Activated naive CD8-positive, alpha-beta T cell treated with anti-CD3 and anti-CD28 coated beads, Interleukin-2, amount 10 ng/mL, durations not matched to agents 7 days and 5 days (primary cell): ENCODE measurements at regions of chr6 and their contacts with region 1.

Region 1: GRCh38 chr6:125790358-125791150 is at the start of gene NCOA7:
- DNase-seq: peak; percentile 85
- ATAC-seq: peak; percentile 85
- H3K4me3 Mint-ChIP-seq: peak within 1 kb of the TSS; percentile 96
- H3K27ac Mint-ChIP-seq: peak within 1 kb of the TSS; percentile 99
- H3K4me1 Mint-ChIP-seq: peaks cover 36% of the 10 kb centered on the region
- H3K27me3 Mint-ChIP-seq: no peaks in the 10 kb centered on the region
- total RNA-seq, gene NCOA7: 51.1 to 58.6 TPM

Region 2: GRCh38 chr6:125301435-125302391 is 488.8 kb before region 1 on chr6 and contains the start of gene HDDC2:
- POLR2A ChIA-PET with region 1: interaction called, 14 read pairs
- DNase-seq: peak; percentile 72
- ATAC-seq: peak; percentile 73
- H3K4me3 Mint-ChIP-seq: peak within 1 kb of the TSS; percentile 92
- H3K27ac Mint-ChIP-seq: peak within 1 kb of the TSS; percentile 90
- H3K4me1 Mint-ChIP-seq: peaks cover 38% of the 10 kb centered on the region
- H3K27me3 Mint-ChIP-seq: peaks cover 21% of the 10 kb centered on the region
- total RNA-seq, gene HDDC2: 61.3 to 72.3 TPM

Region 3: GRCh38 chr6:125639466-125640020 is 151.0 kb before region 1 on chr6:
- POLR2A ChIA-PET with region 1: no interaction called
- DNase-seq: no peak
- ATAC-seq: no peak
- H3K4me3 Mint-ChIP-seq: no peak overlapping the region
- H3K27ac Mint-ChIP-seq: no peak overlapping the region
- H3K4me1 Mint-ChIP-seq: peaks cover 4% of the 10 kb centered on the region
- H3K27me3 Mint-ChIP-seq: peaks cover 4% of the 10 kb centered on the region

Region 4: DNA sequence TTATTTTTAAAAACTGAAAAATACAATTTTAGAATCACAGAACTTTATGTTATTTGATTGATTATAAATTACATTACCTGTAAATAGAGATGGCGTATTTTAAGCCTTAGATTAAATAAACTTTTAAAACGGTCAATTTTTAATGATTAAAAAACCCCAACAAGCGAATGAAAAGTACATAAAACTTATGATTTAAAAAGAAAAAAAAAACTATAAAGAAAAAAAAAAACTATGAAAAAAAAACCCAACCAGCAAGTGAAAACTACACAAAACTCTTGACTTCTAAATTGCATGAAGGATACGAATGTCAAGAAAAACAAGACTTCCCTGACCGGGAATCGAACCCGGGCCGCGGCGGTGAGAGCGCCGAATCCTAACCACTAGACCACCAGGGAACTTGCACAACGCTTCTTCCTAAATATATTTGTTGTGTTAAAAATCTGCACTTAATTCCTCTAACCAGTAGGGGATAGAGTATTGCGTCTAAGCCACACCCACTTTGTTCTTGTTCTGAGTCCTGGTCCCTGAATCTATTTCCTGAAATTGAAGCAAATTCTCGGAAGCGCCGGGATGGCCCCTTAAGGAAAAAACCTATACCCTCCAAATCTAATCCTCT is 10.5 kb before region 1 on chr6:
- POLR2A ChIA-PET with region 1: interaction called, 161 read pairs
- DNase-seq: peak; percentile 87
- ATAC-seq: peak; percentile 79
- H3K4me3 Mint-ChIP-seq: no peak overlapping the region
- H3K27ac Mint-ChIP-seq: no peak overlapping the region
- H3K4me1 Mint-ChIP-seq: peaks cover 10% of the 10 kb centered on the region
- H3K27me3 Mint-ChIP-seq: peaks cover 23% of the 10 kb centered on the region

Region 5: DNA sequence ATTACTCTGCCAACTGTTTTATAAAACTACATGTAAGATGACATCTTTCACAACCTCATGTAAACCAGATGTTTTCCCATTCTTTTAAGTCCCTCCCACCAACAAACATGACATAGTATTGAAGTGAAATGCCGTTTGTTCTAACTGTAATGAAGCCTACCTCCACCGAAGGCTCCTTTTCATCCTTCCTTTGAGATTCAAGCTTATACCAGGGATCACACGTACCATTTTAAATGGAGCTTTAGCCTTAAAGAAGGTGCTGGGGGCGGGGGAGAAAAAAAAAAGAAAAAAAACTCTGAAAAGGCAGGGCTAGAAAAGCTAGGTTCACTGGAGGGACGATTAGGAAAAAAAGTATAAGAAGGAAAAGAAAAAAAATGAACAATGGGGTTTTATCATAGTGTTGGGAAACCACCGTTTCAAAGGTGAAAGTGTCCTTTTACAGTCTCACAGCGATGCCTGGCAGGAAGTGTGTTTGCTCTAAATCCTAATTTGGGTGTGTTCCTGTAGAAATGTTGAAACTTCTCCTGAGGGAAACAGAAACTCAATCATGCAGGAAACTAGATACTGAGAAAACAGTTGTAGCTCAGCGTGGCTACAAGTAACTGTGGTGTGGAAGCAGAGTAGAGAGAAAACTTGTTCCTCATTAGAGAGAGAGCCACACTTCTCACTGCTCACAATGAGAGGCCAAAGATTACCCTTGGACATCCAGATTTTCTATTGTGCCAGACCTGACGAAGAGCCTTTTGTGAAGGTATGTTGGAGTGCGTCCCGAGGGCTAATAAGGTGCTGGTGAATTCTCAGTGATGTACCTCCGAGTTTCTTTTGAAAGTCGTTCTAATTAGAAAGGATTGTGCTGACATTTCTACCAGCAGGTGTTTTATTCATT is 128.4 kb after region 1 on chr6:
- POLR2A ChIA-PET with region 1: interaction called, 35 read pairs
- DNase-seq: no peak
- ATAC-seq: peak; percentile 97
- H3K4me3 Mint-ChIP-seq: peak overlapping the region; percentile 92
- H3K27ac Mint-ChIP-seq: peak overlapping the region; percentile 93
- H3K4me1 Mint-ChIP-seq: peaks cover 33% of the 10 kb centered on the region
- H3K27me3 Mint-ChIP-seq: no peaks in the 10 kb centered on the region

Region 6: DNA sequence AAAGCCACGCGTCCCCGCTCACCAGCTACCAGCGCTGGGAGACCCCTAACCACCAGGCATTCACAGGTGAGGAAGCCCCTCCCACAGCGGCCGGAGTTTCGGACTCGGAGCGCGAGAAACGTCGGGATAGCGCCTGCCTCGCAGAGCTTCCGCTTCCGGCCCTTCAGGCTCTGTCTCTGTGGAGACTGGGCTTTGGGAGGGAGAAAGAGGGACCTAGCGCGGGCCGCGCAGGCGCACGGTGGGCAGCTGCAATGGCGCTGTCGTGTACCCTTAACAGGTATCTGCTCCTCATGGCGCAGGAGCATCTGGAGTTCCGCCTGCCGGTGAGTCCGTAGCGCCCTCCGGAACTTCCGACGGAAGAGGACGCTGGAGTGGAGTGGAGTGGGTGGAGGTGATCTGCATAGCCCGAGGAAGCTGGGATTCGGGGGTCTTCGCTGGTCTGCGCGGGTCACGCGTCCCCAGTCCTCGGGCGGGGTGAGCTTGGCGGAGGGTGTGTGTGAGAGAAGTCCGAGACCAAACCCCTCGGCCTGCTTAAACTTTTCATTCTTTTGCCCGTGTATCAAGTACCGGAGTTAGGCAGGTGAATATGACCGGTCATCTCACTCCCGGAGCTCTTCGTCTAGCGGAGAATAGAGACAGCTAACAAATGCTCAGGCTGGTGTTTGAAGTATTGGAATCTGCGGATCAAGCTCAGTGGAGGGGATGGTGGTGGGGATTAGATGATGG is 195.9 kb after region 1 on chr6 and contains the start of gene TRMT11:
- POLR2A ChIA-PET with region 1: interaction called, 37 read pairs
- DNase-seq: peak; percentile 79
- ATAC-seq: peak; percentile 98
- H3K4me3 Mint-ChIP-seq: peak within 1 kb of the TSS; percentile 31
- H3K27ac Mint-ChIP-seq: no peak within 1 kb of the TSS
- H3K4me1 Mint-ChIP-seq: peaks cover 9% of the 10 kb centered on the region
- H3K27me3 Mint-ChIP-seq: no peaks in the 10 kb centered on the region
- total RNA-seq, gene TRMT11: 24.7 to 25.1 TPM